GM12878 (cell line): ENCODE measurements at regions of chr10 and their contacts with region 1.

Region 1: GRCh38 chr10:14889318-14889717 is 10.7 kb downstream of the SUV39H2 start:
- DNase-seq: no peak
- ATAC-seq: peak; percentile 71
- H3K4me3 ChIP-seq: no peak overlapping the region
- H3K27ac ChIP-seq: no peak overlapping the region
- H3K4me1 ChIP-seq: no peaks in the 10 kb centered on the region
- H3K27me3 ChIP-seq: no peaks in the 10 kb centered on the region
- CTCF ChIP-seq: peak; percentile 28 to 43 (median 39); a peak in 4 of 6 replicates
- EP300 ChIP-seq: no peak
- POLR2A ChIP-seq: no peak
- RAD21 ChIP-seq: peak; percentile 33

Region 2: DNA sequence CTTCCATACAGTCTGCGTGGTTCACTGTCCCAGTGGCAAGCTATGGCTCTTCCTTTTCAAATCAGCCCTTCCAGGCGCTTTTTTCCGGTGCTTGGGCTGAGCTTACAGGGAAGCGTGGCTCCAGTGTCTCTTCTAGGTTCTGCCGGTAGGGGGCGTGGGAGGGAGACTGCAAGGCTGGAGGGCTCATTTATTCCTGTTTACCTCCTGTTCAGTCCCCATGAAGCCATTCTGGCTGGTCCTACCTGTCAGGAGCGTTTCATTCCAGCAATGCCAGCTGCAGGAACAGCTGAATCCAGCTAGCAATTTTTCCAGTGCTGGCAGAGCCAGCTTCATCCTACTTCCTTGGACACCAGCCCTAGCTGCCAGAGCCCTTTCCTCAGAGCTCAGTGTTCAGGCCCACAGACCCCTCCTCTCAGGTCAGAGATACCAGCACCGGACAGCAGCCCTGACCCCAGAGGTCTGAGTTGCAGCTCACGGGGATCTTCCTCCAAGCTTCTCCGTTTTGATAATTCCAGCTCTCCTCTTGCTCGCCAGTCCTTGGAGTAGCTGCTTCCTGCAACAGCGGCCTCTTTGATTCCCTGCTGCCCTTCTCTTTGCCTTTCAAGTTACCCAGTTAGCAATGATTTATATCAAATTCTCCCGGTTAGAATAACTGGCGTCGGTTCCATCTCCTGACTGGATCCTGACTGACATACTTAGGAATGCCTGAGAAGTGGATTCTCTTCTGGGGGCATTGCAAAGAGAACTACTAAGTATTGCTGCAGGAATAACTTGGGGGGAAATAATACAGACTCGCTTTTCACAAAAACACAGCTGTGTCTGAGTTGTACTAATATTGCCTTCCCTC is 688.4 kb before region 1 on chr10:
- CTCF ChIA-PET with region 1: no interaction called
- POLR2A ChIA-PET with region 1: no interaction called
- RAD21 ChIA-PET with region 1: no interaction called
- SMC1A ChIA-PET with region 1: no interaction called
- in situ Hi-C with region 1: no loop called
- intact Hi-C with region 1: no loop called
- DNase-seq: no peak
- ATAC-seq: no peak
- H3K4me3 ChIP-seq: no peak overlapping the region
- H3K27ac ChIP-seq: no peak overlapping the region
- H3K4me1 ChIP-seq: no peaks in the 10 kb centered on the region
- H3K27me3 ChIP-seq: no peaks in the 10 kb centered on the region; a peak in 1 of 4 replicates
- CTCF ChIP-seq: peak; percentile 12 to 35 (median 24); a peak in 3 of 6 replicates
- EP300 ChIP-seq: no peak
- POLR2A ChIP-seq: no peak
- RAD21 ChIP-seq: no peak

Region 3: DNA sequence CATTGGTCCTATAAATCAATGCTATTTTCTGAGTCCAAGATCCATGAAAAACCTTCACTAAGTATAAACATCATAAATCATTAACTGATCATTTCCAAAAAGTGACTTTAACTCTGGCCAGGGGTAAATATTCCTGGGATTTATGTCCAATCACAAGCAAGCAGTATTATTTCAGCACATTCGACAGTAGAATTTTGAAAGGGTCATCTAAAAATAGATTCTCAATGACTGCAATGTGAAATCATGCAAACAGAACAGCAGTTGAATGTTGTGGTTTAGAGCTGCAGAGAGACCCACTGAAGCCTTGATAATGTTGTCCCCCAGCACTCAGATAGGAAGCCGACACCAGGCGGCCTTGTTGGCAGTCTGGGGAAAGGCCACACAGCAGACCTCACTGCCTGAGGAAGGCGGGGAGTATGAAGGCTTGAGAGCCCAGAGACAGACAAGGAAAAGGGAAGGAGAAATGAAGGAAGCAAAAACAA is 152.7 kb before region 1 on chr10:
- CTCF ChIA-PET with region 1: no interaction called
- POLR2A ChIA-PET with region 1: no interaction called
- RAD21 ChIA-PET with region 1: no interaction called
- SMC1A ChIA-PET with region 1: no interaction called
- in situ Hi-C with region 1: no loop called
- intact Hi-C with region 1: no loop called
- DNase-seq: no peak
- ATAC-seq: peak; percentile 78
- H3K4me3 ChIP-seq: no peak overlapping the region
- H3K27ac ChIP-seq: 0 out of 2 replicates have a peak overlapping the region, but pooled peaks have one; percentile 10
- H3K4me1 ChIP-seq: peaks cover 28% of the 10 kb centered on the region
- H3K27me3 ChIP-seq: no peaks in the 10 kb centered on the region
- CTCF ChIP-seq: no peak
- EP300 ChIP-seq: no peak
- POLR2A ChIP-seq: no peak
- RAD21 ChIP-seq: peak; percentile 23; the same call in 1 of the 2 replicates

Region 4: GRCh38 chr10:14826076-14826829 is 63.1 kb before region 1 on chr10:
- CTCF ChIA-PET with region 1: no interaction called
- POLR2A ChIA-PET with region 1: no interaction called
- RAD21 ChIA-PET with region 1: no interaction called
- SMC1A ChIA-PET with region 1: no interaction called
- in situ Hi-C with region 1: no loop called
- intact Hi-C with region 1: no loop called
- DNase-seq: no peak
- ATAC-seq: no peak
- H3K4me3 ChIP-seq: no peak overlapping the region
- H3K27ac ChIP-seq: no peak overlapping the region
- H3K4me1 ChIP-seq: no peaks in the 10 kb centered on the region
- H3K27me3 ChIP-seq: no peaks in the 10 kb centered on the region
- CTCF ChIP-seq: no peak
- EP300 ChIP-seq: no peak
- POLR2A ChIP-seq: no peak
- RAD21 ChIP-seq: no peak

Region 5: GRCh38 chr10:14878266-14879054 is 10.9 kb before region 1 on chr10 and contains the start of gene SUV39H2:
- CTCF ChIA-PET with region 1: interaction called, 13 read pairs
- POLR2A ChIA-PET with region 1: interaction called, 4 read pairs
- RAD21 ChIA-PET with region 1: no interaction called
- SMC1A ChIA-PET with region 1: interaction called, 19 read pairs
- in situ Hi-C with region 1: no loop called
- intact Hi-C with region 1: no loop called
- DNase-seq: peak; percentile 64
- ATAC-seq: peak; percentile 94
- H3K4me3 ChIP-seq: peak within 1 kb of the TSS; percentile 89
- H3K27ac ChIP-seq: peak within 1 kb of the TSS; percentile 73
- H3K4me1 ChIP-seq: peaks cover 5% of the 10 kb centered on the region; the same call in 1 of the 2 replicates
- H3K27me3 ChIP-seq: no peaks in the 10 kb centered on the region
- CTCF ChIP-seq: no peak
- EP300 ChIP-seq: no peak
- POLR2A ChIP-seq: peak; percentile 88
- RAD21 ChIP-seq: no peak
- polyA plus RNA-seq, gene SUV39H2: 26.5 to 40.3 TPM

Region 6: DNA sequence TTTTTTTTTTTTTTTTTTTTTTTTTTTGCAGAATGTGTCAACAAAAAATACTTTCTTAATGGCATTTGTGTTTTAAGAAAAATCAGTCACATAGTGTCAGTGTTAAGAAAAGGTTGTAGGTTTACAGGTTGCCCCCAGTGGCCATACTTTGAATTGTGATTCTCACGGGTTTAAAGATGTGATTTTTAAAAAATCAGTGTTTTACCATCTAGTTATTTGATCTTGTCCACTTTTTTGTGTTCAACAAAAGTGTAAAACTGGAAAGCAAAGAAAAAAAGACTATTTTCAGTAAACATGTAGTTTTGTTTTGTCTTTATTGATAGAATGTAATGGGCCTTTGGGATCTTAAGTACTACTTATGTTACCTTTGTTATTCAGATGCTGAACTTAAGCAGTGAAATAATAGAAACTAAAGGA is 15.0 kb after region 1 on chr10:
- CTCF ChIA-PET with region 1: interaction called, 31 read pairs
- POLR2A ChIA-PET with region 1: no interaction called
- RAD21 ChIA-PET with region 1: no interaction called
- SMC1A ChIA-PET with region 1: interaction called, 7 read pairs
- in situ Hi-C with region 1: no loop called
- intact Hi-C with region 1: no loop called
- DNase-seq: no peak
- ATAC-seq: peak; percentile 88
- H3K4me3 ChIP-seq: no peak overlapping the region
- H3K27ac ChIP-seq: no peak overlapping the region
- H3K4me1 ChIP-seq: no peaks in the 10 kb centered on the region
- H3K27me3 ChIP-seq: no peaks in the 10 kb centered on the region
- CTCF ChIP-seq: peak; percentile 41 to 57 (median 51)
- EP300 ChIP-seq: no peak
- POLR2A ChIP-seq: no peak
- RAD21 ChIP-seq: peak; percentile 31; the same call in 1 of the 2 replicates

Region 7: GRCh38 chr10:14936584-14936983 is 47.3 kb after region 1 on chr10:
- CTCF ChIA-PET with region 1: no interaction called
- POLR2A ChIA-PET with region 1: no interaction called
- RAD21 ChIA-PET with region 1: no interaction called
- SMC1A ChIA-PET with region 1: no interaction called
- in situ Hi-C with region 1: no loop called
- intact Hi-C with region 1: no loop called
- DNase-seq: no peak
- ATAC-seq: no peak
- H3K4me3 ChIP-seq: no peak overlapping the region
- H3K27ac ChIP-seq: no peak overlapping the region
- H3K4me1 ChIP-seq: no peaks in the 10 kb centered on the region
- H3K27me3 ChIP-seq: no peaks in the 10 kb centered on the region
- CTCF ChIP-seq: no peak
- EP300 ChIP-seq: no peak
- POLR2A ChIP-seq: no peak
- RAD21 ChIP-seq: no peak

Region 8: DNA sequence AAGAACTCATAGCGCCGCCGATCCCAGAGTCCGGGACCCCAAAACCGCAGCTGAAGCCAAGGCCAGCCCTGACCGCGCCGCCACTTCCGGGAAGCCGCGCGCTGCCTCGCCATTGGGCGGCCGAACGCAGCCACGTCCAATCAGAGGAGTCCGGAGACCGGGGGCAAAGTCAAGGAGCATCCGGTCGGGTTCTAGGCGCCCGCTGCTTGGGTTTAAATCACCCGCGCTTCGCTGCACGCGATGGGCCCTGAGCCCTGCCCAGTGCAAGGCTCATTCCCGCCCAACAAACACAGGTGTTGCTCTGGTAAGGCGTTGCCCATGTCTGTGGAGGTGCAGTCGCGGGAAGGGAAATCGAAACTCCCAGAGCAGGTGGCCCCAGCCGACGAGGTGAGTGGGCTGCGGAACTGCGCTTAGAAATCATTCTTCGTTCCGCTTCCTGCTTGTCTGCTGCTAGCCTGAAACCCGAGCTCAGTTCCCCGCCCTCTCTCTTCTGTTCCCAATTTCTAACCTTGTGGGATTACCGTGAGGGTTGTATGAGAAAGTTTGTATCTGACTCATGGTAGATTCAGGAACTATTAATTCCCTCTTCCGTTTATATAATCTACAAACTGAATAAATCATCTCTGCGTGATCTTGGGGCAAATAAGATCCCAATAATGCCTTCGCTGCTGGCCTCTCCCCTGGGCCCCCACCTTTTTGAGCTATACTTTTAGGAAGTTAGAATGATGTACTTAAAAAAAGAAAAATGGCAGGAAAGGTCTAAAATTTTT is 64.9 kb after region 1 on chr10 and contains the start of gene DCLRE1C:
- CTCF ChIA-PET with region 1: interaction called, 7 read pairs
- POLR2A ChIA-PET with region 1: no interaction called
- RAD21 ChIA-PET with region 1: interaction called, 4 read pairs
- SMC1A ChIA-PET with region 1: interaction called, 11 read pairs
- in situ Hi-C with region 1: no loop called
- intact Hi-C with region 1: no loop called
- DNase-seq: peak; percentile 82
- ATAC-seq: peak; percentile 86
- H3K4me3 ChIP-seq: peak within 1 kb of the TSS; percentile 91
- H3K27ac ChIP-seq: peak within 1 kb of the TSS; percentile 98
- H3K4me1 ChIP-seq: peaks cover 21% of the 10 kb centered on the region
- H3K27me3 ChIP-seq: no peaks in the 10 kb centered on the region
- CTCF ChIP-seq: no peak
- EP300 ChIP-seq: peak in 1 of 2 experiments; percentile 56; a peak in 2 of 4 replicates
- POLR2A ChIP-seq: peak; percentile 80
- RAD21 ChIP-seq: no peak
- polyA plus RNA-seq, gene DCLRE1C: 15.7 to 26.2 TPM

Region 9: DNA sequence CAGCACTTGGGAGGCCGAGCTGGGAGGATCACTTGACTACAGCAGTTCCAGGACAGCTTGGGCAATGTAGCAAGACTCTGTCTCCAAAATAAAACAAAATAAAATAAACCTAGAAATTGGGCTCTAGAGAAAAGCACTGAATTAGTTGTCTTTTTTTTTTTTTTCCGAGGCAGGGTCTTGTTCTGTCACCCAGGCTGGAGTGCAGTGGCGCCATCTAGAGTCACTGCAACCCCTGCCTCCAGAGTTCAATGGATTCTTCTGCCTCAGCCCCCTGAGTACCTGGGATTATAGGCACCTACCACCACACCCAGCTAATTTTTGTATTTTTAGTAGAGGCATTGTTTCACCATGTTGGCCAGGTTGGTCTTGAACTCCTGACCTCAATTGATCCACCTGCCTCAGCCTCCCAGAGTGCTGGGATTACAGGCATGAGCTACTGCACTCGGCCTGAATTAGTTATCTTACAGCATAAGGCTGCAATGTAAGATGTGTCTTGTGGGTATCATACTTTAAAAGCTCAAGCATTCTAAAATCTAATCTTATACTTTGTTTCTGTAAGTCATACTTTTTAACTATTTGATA is 82.6 kb after region 1 on chr10:
- CTCF ChIA-PET with region 1: interaction called, 13 read pairs
- POLR2A ChIA-PET with region 1: no interaction called
- RAD21 ChIA-PET with region 1: interaction called, 6 read pairs
- SMC1A ChIA-PET with region 1: no interaction called
- in situ Hi-C with region 1: no loop called
- intact Hi-C with region 1: no loop called
- DNase-seq: no peak
- ATAC-seq: peak; percentile 85
- H3K4me3 ChIP-seq: no peak overlapping the region
- H3K27ac ChIP-seq: no peak overlapping the region
- H3K4me1 ChIP-seq: no peaks in the 10 kb centered on the region
- H3K27me3 ChIP-seq: no peaks in the 10 kb centered on the region
- CTCF ChIP-seq: peak; percentile 53 to 75 (median 54)
- EP300 ChIP-seq: no peak
- POLR2A ChIP-seq: no peak
- RAD21 ChIP-seq: peak; percentile 73

Region 10: DNA sequence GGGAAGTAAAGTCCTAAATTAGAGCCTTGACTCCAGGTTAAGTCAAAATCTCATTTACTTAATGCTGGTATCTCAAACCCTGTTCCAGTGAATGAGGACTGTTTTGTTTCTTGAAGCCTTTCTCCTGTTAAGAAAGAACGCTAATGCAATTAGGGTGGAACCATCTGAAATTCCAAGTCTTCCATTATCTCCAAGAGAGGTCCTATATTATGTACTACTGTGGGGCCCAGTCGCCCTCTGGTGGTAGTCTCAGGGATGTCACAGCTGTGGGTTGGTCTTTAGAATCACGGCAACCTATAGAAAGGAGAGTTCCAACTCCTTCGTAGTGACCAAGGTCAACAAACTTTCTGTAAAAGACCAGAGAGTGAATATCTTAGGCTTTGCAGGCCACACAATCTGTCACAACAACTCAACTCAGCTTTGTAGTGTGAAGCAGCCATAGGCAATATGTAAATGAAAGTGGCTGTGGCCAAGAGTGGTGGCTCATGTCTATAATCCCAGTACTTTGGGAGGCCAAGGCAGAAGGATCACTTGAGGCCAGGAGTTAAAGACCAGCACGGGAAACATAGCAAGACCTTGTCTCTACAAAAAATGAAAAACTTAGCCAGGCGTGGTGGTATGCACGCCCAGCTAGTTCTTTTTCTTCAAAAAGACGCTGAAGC is 217.2 kb after region 1 on chr10:
- CTCF ChIA-PET with region 1: interaction called, 3 read pairs
- POLR2A ChIA-PET with region 1: no interaction called
- RAD21 ChIA-PET with region 1: no interaction called
- SMC1A ChIA-PET with region 1: no interaction called
- in situ Hi-C with region 1: no loop called
- intact Hi-C with region 1: loop called (anchors 10 kb)
- DNase-seq: peak; percentile 26
- ATAC-seq: peak; percentile 99
- H3K4me3 ChIP-seq: no peak overlapping the region
- H3K27ac ChIP-seq: no peak overlapping the region
- H3K4me1 ChIP-seq: no peaks in the 10 kb centered on the region
- H3K27me3 ChIP-seq: no peaks in the 10 kb centered on the region
- CTCF ChIP-seq: peak; percentile 90 to 95 (median 93)
- EP300 ChIP-seq: no peak
- POLR2A ChIP-seq: no peak
- RAD21 ChIP-seq: peak; percentile 91